MCF 10A (cell line): ENCODE measurements at regions of chr12 and their contacts with region 1.

Region 1: DNA sequence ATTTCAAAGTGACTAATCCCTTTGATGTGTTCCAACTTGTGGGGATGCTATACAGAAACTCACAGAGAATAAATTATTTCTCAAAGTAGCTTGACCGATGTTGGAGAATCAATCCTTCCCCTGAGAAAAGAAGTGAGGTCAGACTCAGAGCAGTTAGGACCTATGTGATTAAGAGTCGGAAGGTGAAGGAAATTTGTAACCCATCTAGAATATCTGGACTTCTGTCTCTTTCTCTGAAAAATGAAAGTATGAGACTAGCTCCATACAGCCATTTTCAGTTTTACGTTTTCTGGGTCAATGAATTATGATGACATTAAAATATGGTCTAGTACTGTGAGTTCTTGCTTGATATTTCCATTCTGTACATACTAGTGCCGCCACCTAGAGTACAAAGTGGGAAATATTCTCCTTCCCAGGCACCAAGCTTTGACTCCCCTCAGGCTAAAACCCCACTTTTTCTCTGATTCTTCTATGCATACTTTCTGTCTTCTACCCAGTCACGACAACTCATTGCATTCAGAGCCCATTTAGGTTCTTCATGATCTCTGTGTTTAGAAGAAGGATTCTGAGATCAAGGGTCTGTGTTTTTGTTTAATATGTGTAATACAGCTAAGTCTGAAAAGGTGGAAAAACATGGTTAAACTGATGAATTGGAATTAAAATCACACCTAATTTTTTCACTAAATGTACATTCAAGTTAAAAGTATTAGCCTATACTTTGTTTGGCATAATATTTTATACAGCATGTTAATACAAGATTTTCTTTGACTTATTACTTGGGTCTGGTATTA is 6.9 kb upstream of the NTS start:
- DNase-seq: peak; percentile 75
- H3K4me3 Mint-ChIP-seq: peak overlapping the region; percentile 15
- H3K27ac Mint-ChIP-seq: no peak overlapping the region
- H3K4me1 Mint-ChIP-seq: no peaks in the 10 kb centered on the region
- H3K27me3 Mint-ChIP-seq: no peaks in the 10 kb centered on the region
- CTCF ChIP-seq: peak; percentile 86

Region 2: GRCh38 chr12:85484387-85484786 is 382.8 kb before region 1 on chr12:
- CTCF ChIA-PET with region 1: interaction called, 20 read pairs
- POLR2A ChIA-PET with region 1: no interaction called
- intact Hi-C with region 1: no loop called
- DNase-seq: no peak
- H3K4me3 Mint-ChIP-seq: no peak overlapping the region
- H3K27ac Mint-ChIP-seq: no peak overlapping the region
- H3K4me1 Mint-ChIP-seq: no peaks in the 10 kb centered on the region
- H3K27me3 Mint-ChIP-seq: no peaks in the 10 kb centered on the region
- CTCF ChIP-seq: no peak

Region 3: GRCh38 chr12:85580562-85581168 is 286.5 kb before region 1 on chr12:
- CTCF ChIA-PET with region 1: interaction called, 204 read pairs
- POLR2A ChIA-PET with region 1: interaction called, 10 read pairs
- intact Hi-C with region 1: loop called (anchors 1 kb)
- DNase-seq: no peak
- H3K4me3 Mint-ChIP-seq: no peak overlapping the region
- H3K27ac Mint-ChIP-seq: no peak overlapping the region
- H3K4me1 Mint-ChIP-seq: no peaks in the 10 kb centered on the region
- H3K27me3 Mint-ChIP-seq: no peaks in the 10 kb centered on the region
- CTCF ChIP-seq: no peak

Region 4: DNA sequence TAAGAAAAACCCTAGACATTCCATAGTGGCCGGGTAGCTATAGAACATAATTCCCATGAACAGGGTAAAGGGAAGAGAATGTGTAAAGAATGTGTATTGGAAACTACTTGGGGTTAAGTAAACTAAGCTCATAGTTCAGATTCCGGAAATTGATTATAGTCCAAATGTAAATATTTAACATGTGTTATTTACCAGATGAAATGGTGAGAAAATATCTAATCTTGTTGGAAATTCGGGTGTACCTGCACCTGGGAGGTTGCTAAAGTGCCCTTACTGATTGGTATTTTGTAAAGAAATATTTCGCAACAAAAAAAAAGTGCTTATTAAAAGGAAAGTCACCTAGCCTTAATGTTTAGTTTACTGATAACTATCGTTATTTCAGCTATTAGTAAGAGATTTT is 45.4 kb before region 1 on chr12:
- CTCF ChIA-PET with region 1: interaction called, 13 read pairs
- POLR2A ChIA-PET with region 1: no interaction called
- intact Hi-C with region 1: no loop called
- DNase-seq: no peak
- H3K4me3 Mint-ChIP-seq: no peak overlapping the region
- H3K27ac Mint-ChIP-seq: no peak overlapping the region
- H3K4me1 Mint-ChIP-seq: peaks cover 17% of the 10 kb centered on the region
- H3K27me3 Mint-ChIP-seq: no peaks in the 10 kb centered on the region
- CTCF ChIP-seq: no peak

Region 5: DNA sequence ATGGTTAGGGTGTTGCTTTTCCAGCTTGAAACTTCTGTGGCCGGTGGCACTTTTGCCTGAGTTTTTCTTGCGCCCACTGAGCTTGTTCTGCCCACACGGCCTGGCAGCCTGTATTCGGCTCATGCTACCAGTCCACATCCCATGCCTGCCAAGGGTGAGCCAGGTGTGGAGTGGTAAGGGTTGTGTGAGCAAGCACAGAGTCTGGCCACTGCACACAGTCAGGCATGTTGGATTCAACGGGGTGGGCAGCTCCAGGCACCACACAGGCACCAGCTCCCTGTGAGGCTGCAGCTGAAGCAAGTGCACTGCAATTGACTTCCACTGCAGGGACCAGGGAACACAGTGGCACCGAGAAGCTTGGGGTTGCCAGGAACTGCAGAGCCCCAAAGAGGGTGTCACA is 11.9 kb before region 1 on chr12:
- CTCF ChIA-PET with region 1: interaction called, 31 read pairs
- POLR2A ChIA-PET with region 1: interaction called, 4 read pairs
- intact Hi-C with region 1: no loop called
- DNase-seq: no peak
- H3K4me3 Mint-ChIP-seq: no peak overlapping the region
- H3K27ac Mint-ChIP-seq: no peak overlapping the region
- H3K4me1 Mint-ChIP-seq: no peaks in the 10 kb centered on the region
- H3K27me3 Mint-ChIP-seq: no peaks in the 10 kb centered on the region
- CTCF ChIP-seq: no peak